ENCODE measurements at regions of chr16 and their contacts with region 1.

Region 1: GRCh38 chr16:68396481-68396880 is 51.8 kb downstream of the SMPD3 start:
- DNase-seq: peak; percentile 83
- H3K4me3 ChIP-seq: no peak overlapping the region
- H3K27ac ChIP-seq: no peak overlapping the region
- H3K4me1 ChIP-seq: peaks cover 3% of the 10 kb centered on the region
- H3K27me3 ChIP-seq: no peaks in the 10 kb centered on the region

Region 2: DNA sequence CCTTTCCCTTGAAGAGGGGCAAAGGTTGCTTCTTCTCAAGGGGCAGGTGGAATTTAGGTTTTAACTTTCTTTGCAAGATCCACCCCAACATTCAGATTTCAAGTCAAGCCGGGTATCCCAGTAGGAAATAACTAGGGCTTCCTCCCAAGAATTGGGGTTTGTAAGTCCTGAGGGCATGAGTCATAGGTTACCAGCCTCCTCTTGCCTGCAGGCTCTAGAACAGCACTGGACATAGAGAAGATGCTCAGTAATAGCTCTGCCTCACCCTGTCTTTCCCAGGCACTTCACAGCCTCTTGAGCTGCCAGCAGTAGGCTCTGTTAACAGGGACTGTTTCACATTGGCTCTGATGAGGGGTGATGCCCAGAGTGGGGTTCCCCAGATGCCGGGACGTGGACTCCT is 106.9 kb after region 1 on chr16:
- in situ Hi-C with region 1: loop called (anchors 10 kb)
- DNase-seq: peak; percentile 80
- H3K4me3 ChIP-seq: no peak overlapping the region
- H3K27ac ChIP-seq: no peak overlapping the region
- H3K4me1 ChIP-seq: peaks cover 6% of the 10 kb centered on the region; the same call in 1 of the 2 replicates
- H3K27me3 ChIP-seq: no peaks in the 10 kb centered on the region; the same call in 1 of the 2 replicates

Measured in GM23248 (cell line).